AG04450 (cell line): ENCODE measurements at regions of chr3 and their contacts with region 1.

Region 1: GRCh38 chr3:141192345-141192744 is 39.3 kb upstream of the PXYLP1 start:
- DNase-seq: peak; percentile 84
- H3K4me3 ChIP-seq: no peak overlapping the region
- H3K27ac ChIP-seq: no peak overlapping the region
- H3K27me3 ChIP-seq: peaks cover 21% of the 10 kb centered on the region
- CTCF ChIP-seq: peak; percentile 98

Region 2: DNA sequence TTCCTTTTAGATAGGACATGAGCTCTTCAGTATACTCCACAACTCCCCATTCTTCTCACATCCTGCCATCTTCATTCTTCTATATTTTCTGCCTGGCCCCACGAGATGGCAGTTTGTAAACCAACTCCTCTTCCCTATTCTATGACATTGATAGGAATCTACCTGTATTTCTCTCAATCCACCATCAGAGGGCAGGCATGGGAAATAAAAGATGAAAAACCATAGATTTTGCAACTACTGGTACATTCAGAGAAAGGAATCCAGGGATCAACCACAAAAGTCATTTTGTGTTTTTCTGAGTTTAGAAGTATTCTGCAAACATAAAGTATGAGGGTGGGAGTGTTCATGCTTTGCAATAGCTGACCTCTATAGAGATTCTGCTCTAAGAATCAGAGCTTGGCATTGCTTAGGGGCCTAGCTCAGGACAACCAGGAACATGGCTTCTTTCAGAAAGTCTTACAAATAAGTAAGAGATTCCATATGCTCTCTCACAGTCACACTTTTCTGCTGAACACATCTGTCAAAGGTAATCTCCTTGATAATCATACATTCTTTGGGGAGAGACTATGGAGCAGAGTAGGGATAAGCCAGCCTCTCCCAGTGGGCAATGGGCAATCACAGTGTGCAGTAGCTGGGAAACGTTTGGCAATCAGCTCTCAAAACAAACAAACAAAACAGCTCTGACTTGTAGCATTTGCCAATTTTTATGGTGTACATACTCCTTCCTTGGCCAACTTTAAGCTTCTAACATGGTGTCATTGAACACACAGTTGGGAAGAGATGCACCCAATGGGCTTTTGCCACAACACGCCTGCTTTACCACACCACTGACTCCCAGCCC is 293.8 kb before region 1 on chr3:
- CTCF ChIA-PET with region 1: interaction called, 29 read pairs
- POLR2A ChIA-PET with region 1: no interaction called
- DNase-seq: peak; percentile 72
- H3K4me3 ChIP-seq: no peak overlapping the region
- H3K27ac ChIP-seq: peak overlapping the region; percentile 3
- H3K27me3 ChIP-seq: no peaks in the 10 kb centered on the region
- CTCF ChIP-seq: peak; percentile 71

Region 3: GRCh38 chr3:141000027-141000663 is 192.2 kb before region 1 on chr3:
- CTCF ChIA-PET with region 1: interaction called, 80 read pairs
- POLR2A ChIA-PET with region 1: no interaction called
- DNase-seq: peak; percentile 7
- H3K4me3 ChIP-seq: no peak overlapping the region
- H3K27ac ChIP-seq: no peak overlapping the region
- H3K27me3 ChIP-seq: peaks cover 6% of the 10 kb centered on the region
- CTCF ChIP-seq: peak; percentile 78

Region 4: GRCh38 chr3:141011232-141011996 is 180.9 kb before region 1 on chr3:
- CTCF ChIA-PET with region 1: interaction called, 49 read pairs
- POLR2A ChIA-PET with region 1: no interaction called
- DNase-seq: peak; percentile 20
- H3K4me3 ChIP-seq: no peak overlapping the region
- H3K27ac ChIP-seq: no peak overlapping the region
- H3K27me3 ChIP-seq: peaks cover 2% of the 10 kb centered on the region
- CTCF ChIP-seq: peak; percentile 84

Region 5: GRCh38 chr3:141094790-141095545 is 97.4 kb before region 1 on chr3:
- CTCF ChIA-PET with region 1: no interaction called
- POLR2A ChIA-PET with region 1: no interaction called
- DNase-seq: no peak
- H3K4me3 ChIP-seq: no peak overlapping the region
- H3K27ac ChIP-seq: no peak overlapping the region
- H3K27me3 ChIP-seq: peaks cover 19% of the 10 kb centered on the region
- CTCF ChIP-seq: no peak

Region 6: DNA sequence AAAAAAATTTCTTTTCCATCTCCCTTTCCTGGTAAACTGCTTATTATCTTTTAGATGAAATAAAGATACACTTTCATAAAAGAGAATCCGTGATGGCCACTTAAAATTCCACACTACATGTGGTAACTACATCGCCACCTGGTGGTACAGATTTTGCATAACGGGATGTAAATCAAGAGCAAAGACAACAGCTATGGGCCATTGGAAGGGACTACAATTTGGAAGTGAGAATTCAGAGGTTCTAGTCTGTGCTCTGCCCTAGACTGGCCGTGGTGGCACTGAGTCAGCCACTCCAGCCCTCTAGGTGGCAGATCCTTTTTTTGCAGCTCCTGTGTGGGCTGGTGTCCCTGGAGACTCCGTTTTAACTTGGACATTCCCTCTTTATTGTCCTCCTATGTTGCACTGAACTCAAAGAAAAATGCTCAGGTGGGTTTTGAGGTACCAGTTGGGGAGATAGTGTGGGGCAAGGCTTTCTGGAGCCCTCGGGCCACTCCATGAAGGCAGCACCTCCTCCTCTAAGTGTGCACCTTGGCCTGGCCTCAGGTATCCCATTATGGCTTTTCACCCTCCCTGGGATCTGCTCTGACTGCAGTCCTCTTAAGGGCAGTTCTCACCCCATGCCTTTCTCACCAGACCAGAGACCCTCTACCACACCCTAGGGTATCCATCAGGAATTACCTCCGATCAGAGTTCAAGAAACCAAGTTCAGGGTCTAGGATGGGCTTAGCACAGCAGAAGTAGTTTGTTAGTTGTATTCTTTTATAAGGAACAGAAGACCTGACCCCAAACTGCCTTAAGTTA is 86.3 kb before region 1 on chr3:
- CTCF ChIA-PET with region 1: interaction called, 10 read pairs
- POLR2A ChIA-PET with region 1: no interaction called
- DNase-seq: peak; percentile 69
- H3K4me3 ChIP-seq: no peak overlapping the region
- H3K27ac ChIP-seq: no peak overlapping the region
- H3K27me3 ChIP-seq: peaks cover 26% of the 10 kb centered on the region
- CTCF ChIP-seq: peak; percentile 74

Region 7: GRCh38 chr3:141170678-141171295 is 21.6 kb before region 1 on chr3:
- CTCF ChIA-PET with region 1: interaction called, 16 read pairs
- POLR2A ChIA-PET with region 1: no interaction called
- DNase-seq: peak; percentile 4
- H3K4me3 ChIP-seq: no peak overlapping the region
- H3K27ac ChIP-seq: no peak overlapping the region
- H3K27me3 ChIP-seq: no peaks in the 10 kb centered on the region
- CTCF ChIP-seq: no peak

Region 8: DNA sequence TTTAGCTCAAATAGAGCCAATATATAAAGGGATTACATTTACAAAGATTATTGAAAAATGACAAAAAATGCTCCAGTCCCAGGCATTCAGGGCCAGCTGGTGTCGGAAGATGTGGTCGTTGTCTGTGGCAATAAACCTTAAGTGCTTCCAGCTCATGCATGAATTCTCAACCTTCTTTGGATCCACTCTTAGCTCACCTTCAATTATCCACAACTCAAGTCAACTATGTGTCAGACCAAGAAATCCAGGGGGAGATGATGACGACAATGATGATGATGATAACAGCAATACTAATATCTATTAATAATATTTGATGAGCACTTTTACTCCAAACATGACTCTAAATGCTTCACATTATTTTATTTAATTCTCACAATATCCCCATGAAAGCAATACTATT is 14.3 kb before region 1 on chr3:
- CTCF ChIA-PET with region 1: interaction called, 16 read pairs
- POLR2A ChIA-PET with region 1: no interaction called
- DNase-seq: no peak
- H3K4me3 ChIP-seq: no peak overlapping the region
- H3K27ac ChIP-seq: no peak overlapping the region
- H3K27me3 ChIP-seq: peaks cover 2% of the 10 kb centered on the region
- CTCF ChIP-seq: no peak

Region 9: GRCh38 chr3:141379250-141379966 is 187.1 kb after region 1 on chr3:
- CTCF ChIA-PET with region 1: no interaction called
- POLR2A ChIA-PET with region 1: no interaction called
- DNase-seq: no peak
- H3K4me3 ChIP-seq: no peak overlapping the region
- H3K27ac ChIP-seq: no peak overlapping the region
- H3K27me3 ChIP-seq: no peaks in the 10 kb centered on the region
- CTCF ChIP-seq: no peak

Region 10: DNA sequence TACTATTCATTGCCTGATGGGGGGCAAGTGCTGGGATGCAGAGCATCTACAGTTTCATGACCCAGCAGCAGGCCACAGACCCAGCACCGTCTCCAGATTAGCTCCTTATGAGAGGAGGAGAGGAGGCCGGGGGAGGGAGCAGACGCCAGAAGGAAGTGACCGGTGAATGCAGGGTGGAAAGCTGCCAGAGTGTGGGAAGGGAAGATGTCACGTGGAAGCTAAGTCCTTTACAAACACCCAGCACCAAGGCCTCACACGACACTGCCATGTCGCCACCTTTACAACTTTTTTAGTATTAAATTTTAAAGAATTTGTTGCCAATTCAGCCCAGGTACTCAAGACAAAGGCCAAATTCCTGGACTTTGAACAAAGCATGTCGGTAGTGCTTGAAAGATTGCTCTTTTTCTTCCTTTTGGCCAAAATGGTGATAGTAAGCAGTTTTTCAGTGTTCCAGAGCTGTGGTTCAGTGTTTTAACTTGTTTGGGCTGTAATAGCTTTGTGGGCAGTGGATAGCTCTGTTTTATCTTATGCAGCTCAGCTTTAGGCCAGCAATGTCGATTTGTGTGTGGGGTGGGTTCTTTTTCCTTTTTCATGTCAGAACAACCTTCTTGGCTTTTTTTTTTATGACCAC is 234.2 kb after region 1 on chr3:
- CTCF ChIA-PET with region 1: no interaction called
- POLR2A ChIA-PET with region 1: no interaction called
- DNase-seq: no peak
- H3K4me3 ChIP-seq: no peak overlapping the region
- H3K27ac ChIP-seq: peak overlapping the region; percentile 48
- H3K27me3 ChIP-seq: no peaks in the 10 kb centered on the region
- CTCF ChIP-seq: no peak